ENCODE measurements at regions of chr12 and their contacts with region 1.

Region 1: DNA sequence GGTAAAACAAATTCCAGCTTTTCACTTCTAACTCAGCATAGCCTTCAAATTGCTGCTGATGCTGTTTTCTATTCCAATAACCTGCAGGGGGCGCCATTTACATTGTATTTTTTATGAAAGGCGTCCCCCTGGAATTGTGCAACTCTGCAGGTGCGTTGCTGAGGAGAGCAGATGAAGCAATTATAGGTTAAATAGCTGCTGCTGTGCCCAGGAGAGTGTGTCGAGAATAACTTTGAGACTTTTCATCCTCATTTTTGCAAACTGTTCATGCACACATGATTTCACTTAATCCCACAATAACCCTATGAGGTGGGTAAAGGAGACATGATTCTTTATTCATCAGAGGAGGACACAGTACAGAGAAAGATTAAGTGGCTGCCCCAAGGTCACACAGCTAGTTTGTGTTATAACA is 75.7 kb downstream of the MYRFL start:
- DNase-seq: peak; percentile 85
- H3K4me3 ChIP-seq: no peak overlapping the region
- H3K27ac ChIP-seq: no peak overlapping the region
- H3K4me1 ChIP-seq: no peaks in the 10 kb centered on the region
- H3K27me3 ChIP-seq: no peaks in the 10 kb centered on the region
- CTCF ChIP-seq: peak; percentile 71 to 93 (median 78)
- POLR2A ChIP-seq: no peak

Region 2: GRCh38 chr12:70576346-70577282 is 675.9 kb after region 1 on chr12:
- intact Hi-C with region 1: loop called (anchors 2 kb)
- DNase-seq: peak; percentile 10
- H3K4me3 ChIP-seq: no peak overlapping the region
- H3K27ac ChIP-seq: no peak overlapping the region
- H3K4me1 ChIP-seq: no peaks in the 10 kb centered on the region
- H3K27me3 ChIP-seq: no peaks in the 10 kb centered on the region
- CTCF ChIP-seq: peak; percentile 30 to 76 (median 74)
- POLR2A ChIP-seq: no peak

Measured in prostate gland (tissue), 2 donors.